ENCODE measurements at regions of chr1 and their contacts with region 1.

Region 1: DNA sequence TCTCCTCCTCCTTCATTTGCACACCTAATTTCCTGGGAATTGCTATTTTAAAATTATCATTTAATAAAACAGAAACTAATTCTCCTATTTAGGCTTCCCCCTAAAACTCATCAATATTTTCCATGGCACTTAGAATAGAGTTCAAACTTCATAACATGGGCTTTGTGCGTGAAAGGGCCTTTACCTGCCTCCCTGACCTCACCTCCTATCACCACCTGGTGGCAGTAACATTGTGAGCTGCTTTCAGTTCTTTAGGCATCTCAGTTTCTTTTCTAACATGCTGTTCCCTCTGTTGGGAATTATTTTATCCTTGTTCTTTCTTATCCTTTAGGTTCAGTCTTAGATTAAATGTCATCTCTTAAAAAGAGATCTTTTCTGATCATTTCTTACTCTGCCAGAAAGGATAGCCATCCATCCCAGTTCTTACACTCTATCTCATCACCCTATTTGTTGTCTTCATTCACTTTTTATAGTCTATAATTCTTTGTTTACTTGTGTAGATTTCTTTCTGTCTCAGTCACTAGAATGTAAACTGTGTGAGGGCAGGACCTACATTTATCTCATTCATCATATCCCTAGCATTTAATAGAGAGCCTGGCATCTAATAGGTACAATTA is 133.8 kb upstream of the KIAA1614 start:
- DNase-seq: peak; percentile 48
- H3K4me3 Mint-ChIP-seq: no peak overlapping the region
- H3K27ac Mint-ChIP-seq: no peak overlapping the region
- H3K4me1 Mint-ChIP-seq: peaks cover 11% of the 10 kb centered on the region
- H3K27me3 Mint-ChIP-seq: no peaks in the 10 kb centered on the region
- CTCF ChIP-seq: peak; percentile 63

Region 2: GRCh38 chr1:180515864-180516388 is 263.0 kb before region 1 on chr1:
- CTCF ChIA-PET with region 1: interaction called, 3 read pairs
- intact Hi-C with region 1: loop called (anchors 5 kb)
- DNase-seq: peak; percentile 75
- H3K4me3 Mint-ChIP-seq: no peak overlapping the region
- H3K27ac Mint-ChIP-seq: no peak overlapping the region
- H3K4me1 Mint-ChIP-seq: peaks cover 13% of the 10 kb centered on the region
- H3K27me3 Mint-ChIP-seq: no peaks in the 10 kb centered on the region
- CTCF ChIP-seq: peak; percentile 94

Region 3: DNA sequence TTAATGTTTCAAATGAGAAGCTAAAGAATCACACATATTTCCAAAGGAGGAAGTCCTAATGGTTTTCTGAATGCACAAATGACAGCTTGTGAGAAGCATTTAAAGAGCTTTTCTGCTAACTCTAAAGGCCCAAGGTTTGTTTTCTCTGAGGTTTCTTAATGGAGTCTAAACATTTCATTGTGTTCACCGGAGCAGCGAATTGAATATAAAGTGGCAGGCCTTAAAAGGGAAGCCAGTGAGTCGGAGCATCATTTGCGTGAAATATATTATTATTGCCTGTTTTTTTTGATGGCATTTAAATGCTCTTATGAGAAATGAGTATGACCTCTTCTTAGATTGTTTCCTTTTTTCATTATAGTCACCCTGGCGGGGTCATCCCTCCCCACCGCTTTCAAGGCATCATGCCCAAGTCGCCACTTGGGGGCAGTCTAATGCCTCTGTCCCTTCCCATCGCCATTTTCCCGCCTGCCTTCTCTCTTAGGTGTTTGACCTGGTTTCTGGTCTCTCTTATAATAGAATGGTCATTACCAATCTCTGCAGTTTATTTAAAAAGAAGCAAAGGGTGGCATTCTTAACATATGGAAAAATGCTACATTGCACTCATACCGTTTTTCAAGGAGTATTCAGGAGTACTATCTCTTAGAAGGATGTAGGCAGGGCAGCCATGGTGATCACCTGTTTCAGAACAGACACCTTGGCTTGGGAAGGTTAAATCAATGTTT is 245.5 kb before region 1 on chr1:
- CTCF ChIA-PET with region 1: no interaction called
- intact Hi-C with region 1: loop called (anchors 1 kb)
- DNase-seq: peak; percentile 85
- H3K4me3 Mint-ChIP-seq: no peak overlapping the region
- H3K27ac Mint-ChIP-seq: no peak overlapping the region
- H3K4me1 Mint-ChIP-seq: peaks cover 21% of the 10 kb centered on the region
- H3K27me3 Mint-ChIP-seq: no peaks in the 10 kb centered on the region
- CTCF ChIP-seq: peak; percentile 90

Region 4: GRCh38 chr1:180631766-180632325 is 147.0 kb before region 1 on chr1 and contains the start of gene XPR1:
- CTCF ChIA-PET with region 1: no interaction called
- intact Hi-C with region 1: loop called (anchors 2 kb)
- DNase-seq: peak; percentile 98
- H3K4me3 Mint-ChIP-seq: no peak within 1 kb of the TSS
- H3K27ac Mint-ChIP-seq: no peak within 1 kb of the TSS
- H3K4me1 Mint-ChIP-seq: peaks cover 9% of the 10 kb centered on the region
- H3K27me3 Mint-ChIP-seq: peaks cover 8% of the 10 kb centered on the region
- CTCF ChIP-seq: no peak
- total RNA-seq, gene XPR1: 33.7 and 44.5 TPM in 2 replicates

Measured in Calu3 (cell line).